Caco-2 (cell line): ENCODE measurements at regions of chr15 and their contacts with region 1.

Region 1: GRCh38 chr15:92665100-92665555 is 9.6 kb upstream of the FAM174B start:
- DNase-seq: no peak
- H3K4me3 ChIP-seq: no peak overlapping the region
- H3K4me3 Mint-ChIP-seq: peak overlapping the region; percentile 25
- H3K27ac Mint-ChIP-seq: peak overlapping the region; percentile 44
- H3K4me1 ChIP-seq: peaks cover 80% of the 10 kb centered on the region
- H3K4me1 Mint-ChIP-seq: peaks cover 56% of the 10 kb centered on the region
- H3K27me3 ChIP-seq: no peaks in the 10 kb centered on the region
- H3K27me3 Mint-ChIP-seq: no peaks in the 10 kb centered on the region
- CTCF ChIP-seq: no peak

Region 2: DNA sequence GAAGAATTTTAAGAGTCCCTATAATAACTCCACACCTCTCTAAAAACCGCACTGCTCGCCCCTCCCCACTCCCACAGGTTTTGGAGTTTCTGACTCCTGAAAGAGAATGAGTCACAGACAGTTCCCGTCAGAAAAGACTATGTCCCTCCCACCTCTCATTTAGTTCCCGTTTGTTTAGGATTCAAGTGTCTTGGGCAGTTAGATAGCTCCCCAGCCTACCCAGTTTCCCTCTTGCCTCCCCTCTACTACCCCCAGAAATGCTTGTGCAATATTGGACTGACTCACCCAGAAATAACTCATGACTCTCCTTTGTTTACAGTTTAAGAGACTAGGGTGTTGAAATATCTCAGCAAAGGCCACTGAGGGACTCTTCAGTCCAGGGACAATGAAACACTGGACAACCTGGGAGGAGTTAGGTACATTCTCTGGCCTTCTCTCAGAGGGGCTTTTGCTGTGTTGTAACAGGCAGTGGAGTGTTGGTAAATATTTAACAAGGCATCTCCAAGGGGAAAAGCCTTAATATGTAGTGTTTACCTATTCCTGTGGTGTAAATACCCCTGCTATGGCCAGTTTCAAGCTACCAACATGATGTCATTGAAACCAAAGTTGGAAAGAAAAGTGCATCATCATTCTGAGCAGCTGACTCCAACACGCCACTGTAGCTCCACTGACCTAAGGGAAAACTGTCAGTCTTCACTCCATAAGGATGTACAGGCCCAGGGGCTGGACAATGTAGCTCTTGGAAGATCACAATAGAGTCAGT is 138.9 kb after region 1 on chr15:
- CTCF ChIA-PET with region 1: no interaction called
- POLR2A ChIA-PET with region 1: interaction called, 7 read pairs
- intact Hi-C with region 1: loop called (anchors 5 kb)
- DNase-seq: peak; percentile 89 to 92
- H3K4me3 ChIP-seq: no peak overlapping the region
- H3K4me3 Mint-ChIP-seq: peak overlapping the region; percentile 6
- H3K27ac Mint-ChIP-seq: peak overlapping the region; percentile 83
- H3K4me1 ChIP-seq: peaks cover 41% of the 10 kb centered on the region
- H3K4me1 Mint-ChIP-seq: peaks cover 16% of the 10 kb centered on the region
- H3K27me3 ChIP-seq: no peaks in the 10 kb centered on the region
- H3K27me3 Mint-ChIP-seq: no peaks in the 10 kb centered on the region
- CTCF ChIP-seq: no peak